ENCODE measurements at regions of chrX and their contacts with region 1.

Region 1: DNA sequence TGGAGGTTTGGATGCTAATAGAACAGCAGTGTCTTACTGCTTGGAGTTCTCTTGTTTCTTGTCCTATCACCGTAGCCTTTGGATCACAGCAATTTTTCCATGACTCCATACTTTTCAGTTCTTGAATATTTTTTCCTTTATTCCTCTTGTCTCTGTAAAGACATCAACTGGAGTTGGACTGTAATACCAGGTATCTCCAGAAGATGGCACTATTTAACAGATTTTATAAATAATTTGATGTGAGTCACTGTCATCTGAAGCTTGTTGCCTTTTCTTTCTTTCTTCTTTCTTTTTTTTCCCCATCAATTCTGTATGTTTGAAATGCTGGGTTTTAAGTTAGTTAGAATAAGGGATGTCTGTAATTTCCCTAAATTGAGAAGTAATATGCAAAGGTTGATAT is 24.1 kb downstream of the HPRT1 start:
- DNase-seq: peak in 2 of 9 experiments; percentile 43 to 52
- ATAC-seq: no peak
- H3K4me3 ChIP-seq: no peak overlapping the region
- H3K4me3 Mint-ChIP-seq: no peak overlapping the region
- H3K27ac ChIP-seq: no peak overlapping the region
- H3K27ac Mint-ChIP-seq: no peak overlapping the region
- H3K4me1 ChIP-seq: no peaks in the 10 kb centered on the region
- H3K4me1 Mint-ChIP-seq: no peaks in the 10 kb centered on the region
- H3K27me3 ChIP-seq: no peaks in the 10 kb centered on the region
- H3K27me3 Mint-ChIP-seq: no peaks in the 10 kb centered on the region
- CTCF ChIP-seq: peak; percentile 59

Region 2: GRCh38 chrX:134764212-134764785 is 280.3 kb after region 1 on chrX:
- CTCF ChIA-PET with region 1: interaction called, 3 read pairs
- POLR2A ChIA-PET with region 1: no interaction called
- intact Hi-C with region 1: loop called in 1 of 2 experiments (anchors 5 kb)
- DNase-seq: peak in 2 of 9 experiments; percentile 27 to 41
- ATAC-seq: peak; percentile 75
- H3K4me3 ChIP-seq: no peak overlapping the region
- H3K4me3 Mint-ChIP-seq: no peak overlapping the region
- H3K27ac ChIP-seq: no peak overlapping the region
- H3K27ac Mint-ChIP-seq: no peak overlapping the region
- H3K4me1 ChIP-seq: no peaks in the 10 kb centered on the region
- H3K4me1 Mint-ChIP-seq: no peaks in the 10 kb centered on the region
- H3K27me3 ChIP-seq: no peaks in the 10 kb centered on the region
- H3K27me3 Mint-ChIP-seq: no peaks in the 10 kb centered on the region
- CTCF ChIP-seq: no peak

Region 3: GRCh38 chrX:134782796-134783195 is 298.8 kb after region 1 on chrX:
- CTCF ChIA-PET with region 1: interaction called, 4 read pairs
- POLR2A ChIA-PET with region 1: no interaction called
- intact Hi-C with region 1: loop called (anchors 1 to 2 kb)
- DNase-seq: peak in 2 of 9 experiments; percentile 12 to 27
- ATAC-seq: no peak
- H3K4me3 ChIP-seq: no peak overlapping the region
- H3K4me3 Mint-ChIP-seq: no peak overlapping the region
- H3K27ac ChIP-seq: no peak overlapping the region
- H3K27ac Mint-ChIP-seq: no peak overlapping the region
- H3K4me1 ChIP-seq: no peaks in the 10 kb centered on the region
- H3K4me1 Mint-ChIP-seq: no peaks in the 10 kb centered on the region
- H3K27me3 ChIP-seq: no peaks in the 10 kb centered on the region
- H3K27me3 Mint-ChIP-seq: no peaks in the 10 kb centered on the region
- CTCF ChIP-seq: no peak

Region 4: DNA sequence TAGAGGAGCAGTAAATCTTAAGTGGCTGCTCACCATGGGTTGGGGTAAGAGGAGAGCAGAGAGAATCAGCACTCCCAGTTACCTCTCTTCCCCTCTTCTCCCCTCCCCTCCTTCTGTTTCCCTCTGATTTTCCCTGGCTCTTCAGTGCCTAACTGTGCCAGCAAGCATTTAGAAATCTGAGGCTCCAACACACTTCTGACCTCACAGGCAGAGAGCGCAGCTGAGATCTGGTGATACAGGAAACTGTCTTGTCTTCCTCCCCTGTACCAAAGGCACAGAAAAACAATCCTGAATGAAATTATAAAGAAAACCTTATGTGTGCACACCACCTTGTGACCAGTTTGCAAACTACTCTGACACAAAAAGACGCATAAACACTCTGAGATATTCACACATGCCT is 424.3 kb after region 1 on chrX:
- CTCF ChIA-PET with region 1: no interaction called
- POLR2A ChIA-PET with region 1: no interaction called
- intact Hi-C with region 1: loop called in 1 of 2 experiments (anchors 2 kb)
- DNase-seq: peak in 3 of 9 experiments; percentile 10 to 43 (median 21)
- ATAC-seq: peak; percentile 79
- H3K4me3 ChIP-seq: no peak overlapping the region
- H3K4me3 Mint-ChIP-seq: no peak overlapping the region
- H3K27ac ChIP-seq: no peak overlapping the region
- H3K27ac Mint-ChIP-seq: peak overlapping the region; percentile 2
- H3K4me1 ChIP-seq: no peaks in the 10 kb centered on the region
- H3K4me1 Mint-ChIP-seq: peaks cover 10% of the 10 kb centered on the region
- H3K27me3 ChIP-seq: no peaks in the 10 kb centered on the region
- H3K27me3 Mint-ChIP-seq: no peaks in the 10 kb centered on the region
- CTCF ChIP-seq: no peak